Heart right ventricle (tissue), 16 donors: ENCODE measurements at regions of chr20 and their contacts with region 1.

Region 1: GRCh38 chr20:37345339-37346230 is at the start of gene SRC:
- DNase-seq: peak; percentile 80 to 86
- ATAC-seq: peak; percentile 65 to 91 (median 81)
- H3K4me3 ChIP-seq: peak within 1 kb of the TSS; percentile 38 to 76 (median 66)
- H3K27ac ChIP-seq: peak within 1 kb of the TSS in 9 of 10 donors; percentile 58 to 85 (median 70)
- H3K4me1 ChIP-seq: peaks cover 0 to 46% (median 9%) of the 10 kb centered on the region in 9 donors
- H3K27me3 ChIP-seq: peaks cover 0 to 22% (median 0%) of the 10 kb centered on the region in 7 donors
- CTCF ChIP-seq: no peak
- total RNA-seq, gene SRC: 1.9 to 10.8 (median 3.6) TPM

Region 2: GRCh38 chr20:37265152-37265551 is 80.4 kb before region 1 on chr20:
- intact Hi-C with region 1: no loop called
- DNase-seq: no peak
- ATAC-seq: no peak
- H3K4me3 ChIP-seq: no peak overlapping the region
- H3K27ac ChIP-seq: no peak overlapping the region
- H3K4me1 ChIP-seq: peaks cover 0 to 4% (median 0%) of the 10 kb centered on the region in 9 donors
- H3K27me3 ChIP-seq: peaks cover 0 to 29% (median 16%) of the 10 kb centered on the region in 7 donors
- CTCF ChIP-seq: no peak

Region 3: DNA sequence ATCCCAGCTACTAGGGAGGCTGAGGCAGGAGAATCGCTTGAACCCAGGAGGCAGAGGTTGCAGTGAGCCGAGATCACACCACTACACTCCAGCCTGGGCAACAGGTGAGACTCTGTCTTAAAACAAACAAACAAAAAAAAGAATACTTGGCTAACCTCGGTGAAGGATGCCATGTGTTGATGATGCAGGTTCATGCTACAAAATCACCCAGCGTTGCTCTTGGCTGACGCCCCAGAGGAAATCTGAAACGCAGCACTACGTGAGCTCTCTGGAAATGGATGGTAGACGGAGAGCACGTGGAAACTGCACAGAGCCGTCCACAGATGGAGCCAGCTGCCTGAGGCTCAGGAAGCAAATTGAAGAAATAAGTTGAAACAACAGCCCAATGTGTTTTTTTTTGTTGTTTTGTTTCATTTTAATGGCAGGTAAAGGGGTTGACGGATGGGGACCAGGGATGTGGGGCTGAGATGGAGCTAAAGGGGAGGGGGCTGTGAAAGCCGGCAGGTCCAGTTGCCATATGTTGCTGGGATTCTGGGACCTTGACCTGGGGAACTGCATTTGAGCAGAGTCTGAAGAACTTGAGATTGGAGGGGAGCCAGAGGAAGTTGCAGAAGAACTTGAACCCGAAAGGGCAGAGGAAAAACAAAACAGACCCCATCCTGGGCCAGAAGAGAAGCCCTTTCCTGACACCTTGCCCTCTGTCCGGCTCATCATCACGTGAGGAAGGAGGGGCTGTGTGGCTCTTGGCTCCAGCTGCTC is 68.9 kb before region 1 on chr20:
- intact Hi-C with region 1: no loop called
- DNase-seq: peak; percentile 37 to 52
- ATAC-seq: peak; percentile 75 to 94 (median 86)
- H3K4me3 ChIP-seq: peak overlapping the region in 1 of 10 donors; percentile 1
- H3K27ac ChIP-seq: peak overlapping the region in 3 of 10 donors; percentile 28 to 30 (median 29)
- H3K4me1 ChIP-seq: peaks cover 0 to 35% (median 8%) of the 10 kb centered on the region in 9 donors
- H3K27me3 ChIP-seq: peaks cover 0 to 6% (median 0%) of the 10 kb centered on the region in 7 donors
- CTCF ChIP-seq: peak in 8 of 9 donors; percentile 12 to 61 (median 46)

Region 4: DNA sequence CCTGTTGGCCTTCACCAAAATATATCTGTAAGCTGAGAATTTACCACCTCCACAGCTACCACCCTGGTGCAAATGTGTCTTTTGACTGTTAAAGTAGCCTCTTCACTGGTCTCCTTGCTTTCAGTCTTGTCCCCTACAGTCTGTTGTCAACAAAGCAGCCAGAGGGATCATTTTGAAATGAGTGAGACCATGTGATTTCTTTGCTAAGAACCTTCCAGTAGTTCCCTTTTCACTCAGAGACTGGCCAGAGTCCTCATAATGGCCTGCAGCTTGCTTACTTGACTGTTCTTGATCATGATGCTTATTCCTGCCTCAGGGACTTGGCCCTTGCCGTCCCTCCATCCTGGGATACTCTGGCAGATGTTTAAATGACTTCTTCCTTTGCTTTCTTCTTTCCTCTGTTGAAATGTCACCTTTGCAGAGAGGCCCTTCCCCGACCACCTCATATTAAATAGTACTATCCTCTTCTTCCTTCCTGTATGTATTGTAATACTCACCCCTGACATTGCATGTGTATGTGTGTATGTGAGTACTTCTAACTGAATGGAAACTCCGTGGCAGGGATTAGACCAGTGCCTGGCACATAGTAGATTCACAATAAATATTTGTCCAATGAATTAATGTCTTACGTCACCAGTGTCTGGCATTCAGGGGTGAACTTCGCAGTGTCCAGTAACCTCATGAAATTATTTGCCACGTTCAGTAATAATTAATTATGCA is 51.2 kb before region 1 on chr20:
- intact Hi-C with region 1: loop called in 1 of 10 experiments (anchors 5 kb)
- DNase-seq: no peak
- ATAC-seq: no peak
- H3K4me3 ChIP-seq: no peak overlapping the region
- H3K27ac ChIP-seq: peak overlapping the region in 2 of 10 donors; percentile 7 to 73
- H3K4me1 ChIP-seq: peaks cover 6 to 71% (median 34%) of the 10 kb centered on the region in 9 donors
- H3K27me3 ChIP-seq: no peaks in the 10 kb centered on the region
- CTCF ChIP-seq: no peak

Region 5: DNA sequence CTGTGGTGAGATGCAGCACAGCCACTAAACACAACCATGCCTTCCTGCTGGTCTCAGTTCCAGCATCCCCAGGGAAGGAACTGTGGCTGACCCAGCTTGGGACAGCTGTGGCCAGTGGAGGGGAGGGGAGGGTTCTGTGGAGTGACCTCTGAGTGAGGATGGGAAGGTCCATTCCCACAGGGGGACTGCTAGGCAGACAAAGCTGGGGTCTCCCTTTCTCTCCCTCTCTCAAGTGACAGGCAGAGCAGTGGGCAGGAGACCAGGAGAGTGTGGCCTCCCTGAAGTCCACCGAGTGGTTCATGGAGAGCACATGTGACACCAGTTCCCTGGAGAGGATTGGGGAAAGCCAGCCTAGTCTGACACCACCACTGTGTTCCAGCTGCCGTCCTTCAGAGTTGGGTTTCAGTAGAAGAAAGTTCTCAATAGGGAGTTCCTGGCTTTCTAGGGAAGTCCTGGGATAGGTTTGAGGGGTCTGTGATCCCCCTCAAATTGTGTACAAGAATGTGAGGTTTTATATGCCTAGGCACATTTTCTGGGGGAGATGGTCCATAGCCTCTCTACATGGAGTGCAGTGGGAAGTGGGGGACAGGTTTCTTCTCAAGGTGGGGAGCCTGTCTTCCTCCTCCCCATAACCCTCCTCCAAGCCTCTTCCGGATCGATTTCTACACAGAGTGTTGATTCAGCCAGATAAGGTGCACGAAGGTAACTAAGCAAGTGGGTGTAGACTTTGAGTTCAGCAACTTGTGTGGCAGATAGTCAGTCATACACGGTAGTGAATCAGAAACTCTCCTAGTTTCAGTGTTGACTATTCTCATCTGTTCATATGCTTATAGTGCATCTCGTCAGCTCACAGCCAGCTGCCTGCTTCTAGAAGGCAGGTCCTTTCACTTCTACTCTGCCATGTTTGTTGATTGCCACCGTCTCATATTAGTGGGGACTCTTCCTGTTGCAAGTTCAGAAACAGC is 37.2 kb before region 1 on chr20:
- intact Hi-C with region 1: loop called in 1 of 10 experiments (anchors 5 kb)
- DNase-seq: peak; percentile 29 to 30
- ATAC-seq: peak; percentile 31 to 78 (median 60)
- H3K4me3 ChIP-seq: no peak overlapping the region
- H3K27ac ChIP-seq: peak overlapping the region in 2 of 10 donors; percentile 5 to 42
- H3K4me1 ChIP-seq: peaks cover 0 to 41% (median 7%) of the 10 kb centered on the region in 9 donors
- H3K27me3 ChIP-seq: no peaks in the 10 kb centered on the region
- CTCF ChIP-seq: no peak